ENCODE measurements at regions of chr2 and their contacts with region 1.

Region 1: GRCh38 chr2:3738454-3738853 is 35.1 kb downstream of the DCDC2C start:
- DNase-seq: peak; percentile 34
- ATAC-seq: peak; percentile 94
- H3K4me3 ChIP-seq: no peak overlapping the region
- H3K27ac ChIP-seq: no peak overlapping the region
- H3K4me1 ChIP-seq: no peaks in the 10 kb centered on the region
- H3K27me3 ChIP-seq: peaks cover 38% of the 10 kb centered on the region
- CTCF ChIP-seq: peak; percentile 42 to 62 (median 57); a peak in 4 of 6 replicates
- POLR2A ChIP-seq: no peak
- RAD21 ChIP-seq: peak; percentile 64

Region 2: DNA sequence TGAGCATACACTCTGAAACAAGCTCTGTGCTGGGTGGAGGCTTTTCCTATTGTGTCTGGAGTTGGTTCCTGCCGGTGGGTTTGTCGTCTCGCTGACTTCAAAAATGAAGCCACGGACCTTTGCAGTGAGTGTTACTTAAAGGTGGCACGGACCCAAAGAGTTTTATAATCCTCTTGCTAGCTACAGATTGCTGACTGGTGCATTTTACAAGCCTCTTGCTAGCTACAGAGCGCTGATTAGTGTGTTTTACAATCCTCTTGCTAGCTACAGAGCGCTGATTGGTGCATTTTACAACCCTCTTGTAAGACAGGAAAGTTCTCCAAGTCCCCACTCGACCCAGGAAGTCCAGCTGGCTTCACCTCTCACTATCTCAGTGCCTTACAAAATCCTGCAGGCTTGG is 19.8 kb before region 1 on chr2:
- CTCF ChIA-PET with region 1: no interaction called
- POLR2A ChIA-PET with region 1: no interaction called
- RAD21 ChIA-PET with region 1: no interaction called
- intact Hi-C with region 1: no loop called
- DNase-seq: no peak
- ATAC-seq: no peak
- H3K4me3 ChIP-seq: no peak overlapping the region
- H3K27ac ChIP-seq: no peak overlapping the region
- H3K4me1 ChIP-seq: no peaks in the 10 kb centered on the region
- H3K27me3 ChIP-seq: peaks cover 35% of the 10 kb centered on the region
- CTCF ChIP-seq: no peak
- POLR2A ChIP-seq: no peak
- RAD21 ChIP-seq: no peak

Region 3: GRCh38 chr2:3762771-3763447 is 24.5 kb after region 1 on chr2:
- CTCF ChIA-PET with region 1: no interaction called
- POLR2A ChIA-PET with region 1: no interaction called
- RAD21 ChIA-PET with region 1: no interaction called
- intact Hi-C with region 1: no loop called
- DNase-seq: no peak
- ATAC-seq: no peak
- H3K4me3 ChIP-seq: no peak overlapping the region
- H3K27ac ChIP-seq: no peak overlapping the region
- H3K4me1 ChIP-seq: no peaks in the 10 kb centered on the region
- H3K27me3 ChIP-seq: peaks cover 59% of the 10 kb centered on the region
- CTCF ChIP-seq: no peak
- POLR2A ChIP-seq: no peak
- RAD21 ChIP-seq: no peak

Region 4: GRCh38 chr2:3780477-3781402 is 42.3 kb after region 1 on chr2:
- CTCF ChIA-PET with region 1: interaction called, 18 read pairs
- POLR2A ChIA-PET with region 1: no interaction called
- RAD21 ChIA-PET with region 1: interaction called in 1 of 2 experiments, 3 read pairs
- intact Hi-C with region 1: loop called (anchors 2 kb)
- DNase-seq: peak; percentile 46
- ATAC-seq: peak; percentile 97
- H3K4me3 ChIP-seq: no peak overlapping the region
- H3K27ac ChIP-seq: no peak overlapping the region
- H3K4me1 ChIP-seq: peaks cover 0 to 7% of the 10 kb centered on the region in 2 experiments; a peak in 1 of 4 replicates
- H3K27me3 ChIP-seq: peaks cover 13% of the 10 kb centered on the region; the same call in 1 of the 2 replicates
- CTCF ChIP-seq: peak; percentile 69 to 91 (median 88); a peak in 5 of 6 replicates
- POLR2A ChIP-seq: no peak
- RAD21 ChIP-seq: peak; percentile 64

Region 5: GRCh38 chr2:3805201-3805939 is 66.9 kb after region 1 on chr2:
- CTCF ChIA-PET with region 1: interaction called, 12 read pairs
- POLR2A ChIA-PET with region 1: no interaction called
- RAD21 ChIA-PET with region 1: no interaction called
- intact Hi-C with region 1: loop called (anchors 2 kb)
- DNase-seq: peak; percentile 23
- ATAC-seq: peak; percentile 96
- H3K4me3 ChIP-seq: no peak overlapping the region
- H3K27ac ChIP-seq: no peak overlapping the region
- H3K4me1 ChIP-seq: no peaks in the 10 kb centered on the region
- H3K27me3 ChIP-seq: peaks cover 10% of the 10 kb centered on the region; the same call in 1 of the 2 replicates
- CTCF ChIP-seq: peak; percentile 66 to 84 (median 71); a peak in 5 of 6 replicates
- POLR2A ChIP-seq: no peak
- RAD21 ChIP-seq: peak; percentile 55

Region 6: DNA sequence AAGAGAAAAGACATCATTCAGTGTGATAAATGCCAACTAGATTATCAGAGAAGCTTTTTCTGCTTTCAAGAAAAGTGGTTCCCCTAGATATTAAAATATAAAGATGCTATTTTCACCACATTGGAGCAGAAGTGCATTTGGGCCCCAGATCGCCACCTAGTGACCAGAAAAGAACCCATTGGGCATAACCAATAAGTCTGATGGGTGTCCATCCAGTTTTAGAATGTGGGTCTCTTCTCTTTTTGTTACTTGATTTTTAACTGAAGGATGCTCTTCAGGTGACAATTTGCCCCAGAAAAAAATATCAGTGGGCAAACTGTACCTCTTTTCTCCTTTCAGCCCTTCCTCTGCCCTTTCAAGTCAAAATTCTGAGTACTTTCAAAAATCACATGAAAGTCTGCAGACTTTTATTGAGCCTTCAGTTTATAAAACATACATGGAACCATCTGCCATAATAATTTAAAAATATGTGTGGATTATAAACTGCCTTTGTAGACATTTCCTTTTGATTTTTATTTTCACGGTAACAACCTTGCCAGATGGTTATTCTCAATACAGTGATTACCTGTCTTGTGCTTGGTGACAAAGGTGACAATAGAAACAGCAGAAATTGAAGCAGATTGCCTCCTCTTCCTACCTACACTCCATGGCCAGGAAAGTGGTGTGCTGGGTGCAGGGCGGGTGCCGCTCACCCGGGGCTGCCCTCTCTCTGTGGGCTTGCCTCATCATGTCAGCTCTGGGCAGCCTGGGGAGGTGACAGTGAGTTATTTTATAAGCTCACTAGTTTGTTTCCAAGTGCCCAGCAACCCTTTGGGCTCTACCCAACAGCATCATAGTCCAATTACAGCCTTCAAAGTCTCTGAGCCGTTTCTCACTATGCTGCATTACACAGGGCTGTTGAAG is 89.5 kb after region 1 on chr2:
- CTCF ChIA-PET with region 1: no interaction called
- POLR2A ChIA-PET with region 1: no interaction called
- RAD21 ChIA-PET with region 1: no interaction called
- intact Hi-C with region 1: loop called (anchors 2 kb)
- DNase-seq: no peak
- ATAC-seq: peak; percentile 88
- H3K4me3 ChIP-seq: no peak overlapping the region
- H3K27ac ChIP-seq: no peak overlapping the region
- H3K4me1 ChIP-seq: no peaks in the 10 kb centered on the region
- H3K27me3 ChIP-seq: peaks cover 25% of the 10 kb centered on the region
- CTCF ChIP-seq: peak; percentile 47 to 80 (median 78); a peak in 5 of 6 replicates
- POLR2A ChIP-seq: no peak
- RAD21 ChIP-seq: peak; percentile 42

Measured in HCT116 (cell line).